ENCODE measurements at regions of chr3 and their contacts with region 1.

Region 1: GRCh38 chr3:179451265-179452175 is at the start of gene GNB4:
- DNase-seq: peak; percentile 34 to 88
- H3K4me3 ChIP-seq: peak within 1 kb of the TSS; percentile 85 to 98
- H3K27ac ChIP-seq: peak within 1 kb of the TSS; percentile 88 to 99
- H3K4me1 ChIP-seq: peaks cover 0 to 21% of the 10 kb centered on the region in 2 donors
- H3K27me3 ChIP-seq: no peaks in the 10 kb centered on the region
- CTCF ChIP-seq: no peak
- total RNA-seq, gene GNB4: 25.3 TPM

Region 2: GRCh38 chr3:179071550-179072397 is 379.7 kb before region 1 on chr3 and contains the start of gene ZMAT3:
- intact Hi-C with region 1: loop called (anchors 5 kb)
- DNase-seq: peak; percentile 41 to 92
- H3K4me3 ChIP-seq: peak within 1 kb of the TSS; percentile 75 to 91
- H3K27ac ChIP-seq: peak within 1 kb of the TSS; percentile 76 to 89
- H3K4me1 ChIP-seq: peaks cover 0 to 9% of the 10 kb centered on the region in 2 donors
- H3K27me3 ChIP-seq: no peaks in the 10 kb centered on the region
- CTCF ChIP-seq: no peak
- total RNA-seq, gene ZMAT3: 38.0 TPM

Region 3: DNA sequence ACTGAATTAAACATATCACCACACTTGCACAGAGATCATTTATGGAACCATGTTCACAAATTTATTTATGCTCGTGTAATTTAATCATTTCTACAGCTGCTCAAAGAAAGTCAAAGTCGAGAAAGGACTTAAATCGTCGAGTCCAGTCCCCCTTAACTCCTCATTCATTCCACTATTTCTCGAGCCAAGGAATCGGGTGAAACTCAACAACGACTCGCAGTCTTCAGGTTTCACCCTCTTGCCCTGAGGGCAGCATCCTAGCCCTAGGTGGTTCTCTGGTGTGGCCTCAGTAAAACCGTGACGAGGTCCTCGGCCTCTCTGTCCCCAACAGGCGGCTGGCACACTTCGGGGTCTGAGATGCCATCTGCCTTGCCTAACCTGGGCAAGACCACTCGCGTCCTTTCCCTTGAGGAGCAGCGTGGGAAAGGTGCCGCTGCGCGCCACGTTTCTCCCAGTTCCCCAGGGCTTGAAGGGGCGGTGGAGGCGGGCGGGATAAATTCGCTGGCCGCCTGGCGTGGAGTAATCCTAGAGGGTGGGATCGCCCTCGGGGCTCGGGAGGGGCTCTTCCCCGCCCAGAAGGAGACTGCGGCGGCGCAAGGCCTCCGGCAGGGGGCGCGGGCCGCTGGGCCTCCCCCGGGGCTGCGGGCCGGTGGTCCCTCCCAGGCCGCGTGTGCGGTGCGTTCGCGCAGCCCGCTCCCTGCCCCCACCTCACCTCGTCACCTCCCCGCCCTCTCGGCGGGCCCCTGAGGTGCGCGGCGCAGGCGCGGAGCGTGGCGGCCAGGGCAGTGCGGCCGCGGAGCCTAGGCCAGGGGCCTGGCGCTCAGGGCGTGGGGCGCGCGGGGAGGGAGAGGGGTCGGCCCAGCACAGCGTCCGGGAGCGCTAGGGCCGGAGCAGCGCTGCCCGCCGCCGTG is 129.0 kb before region 1 on chr3 and contains the start of gene ZNF639:
- intact Hi-C with region 1: loop called (anchors 5 kb)
- DNase-seq: peak; percentile 34 to 93
- H3K4me3 ChIP-seq: peak within 1 kb of the TSS; percentile 86 to 92
- H3K27ac ChIP-seq: peak within 1 kb of the TSS; percentile 94 to 98
- H3K4me1 ChIP-seq: peaks cover 3 to 16% of the 10 kb centered on the region in 2 donors
- H3K27me3 ChIP-seq: no peaks in the 10 kb centered on the region
- CTCF ChIP-seq: peak; percentile 67 to 90 (median 70)
- total RNA-seq, gene ZNF639: 21.4 TPM

Region 4: GRCh38 chr3:179421500-179421899 is 30.0 kb before region 1 on chr3:
- intact Hi-C with region 1: loop called (anchors 2 kb)
- DNase-seq: peak in 1 of 2 donors; percentile 69
- H3K4me3 ChIP-seq: no peak overlapping the region
- H3K27ac ChIP-seq: peak overlapping the region in 1 of 2 donors; percentile 33
- H3K4me1 ChIP-seq: peaks cover 0 to 3% of the 10 kb centered on the region in 2 donors
- H3K27me3 ChIP-seq: no peaks in the 10 kb centered on the region
- CTCF ChIP-seq: peak; percentile 10 to 74 (median 48)

Region 5: DNA sequence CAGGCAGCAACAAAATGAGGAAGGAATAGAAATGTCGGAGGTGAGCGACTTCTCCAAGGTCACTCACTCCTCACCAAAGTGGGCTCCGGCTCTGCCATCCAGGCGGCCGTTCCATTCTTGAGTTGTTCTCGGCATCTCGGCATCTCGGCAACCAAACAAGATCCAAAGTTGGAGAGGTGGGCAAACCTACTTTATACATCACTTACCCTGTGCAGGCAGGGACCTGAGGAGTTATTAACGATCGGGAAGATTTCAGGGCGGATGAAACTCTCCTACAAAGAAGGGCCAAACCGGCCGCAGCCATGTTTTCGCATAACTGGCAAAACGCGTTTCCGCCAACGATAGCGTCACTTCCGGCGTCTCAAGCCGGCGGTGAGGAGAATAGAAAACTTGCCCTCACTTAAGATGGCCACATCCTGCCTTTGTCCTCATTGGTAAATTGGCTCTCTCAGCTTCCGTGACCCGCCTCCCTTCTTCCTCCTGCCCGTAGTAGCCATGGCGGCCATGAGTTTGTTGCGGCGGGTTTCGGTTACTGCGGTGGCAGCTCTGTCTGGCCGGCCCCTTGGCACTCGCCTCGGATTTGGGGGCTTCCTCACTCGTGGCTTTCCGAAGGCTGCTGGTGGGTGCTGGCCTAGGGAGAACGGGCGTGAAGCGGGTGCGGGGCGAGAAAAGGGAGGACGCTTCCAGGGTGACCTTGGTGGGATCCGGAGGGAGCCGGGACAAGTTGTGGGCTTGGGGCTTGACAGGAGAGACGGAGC is 153.0 kb after region 1 on chr3 and contains the starts of genes MRPL47 and NDUFB5:
- intact Hi-C with region 1: loop called (anchors 2 kb)
- DNase-seq: peak; percentile 79 to 97
- H3K4me3 ChIP-seq: peak within 1 kb of the TSS; percentile 78 to 84
- H3K27ac ChIP-seq: peak within 1 kb of the TSS; percentile 79 to 87
- H3K4me1 ChIP-seq: peaks cover 7 to 10% of the 10 kb centered on the region in 2 donors
- H3K27me3 ChIP-seq: no peaks in the 10 kb centered on the region
- CTCF ChIP-seq: no peak
- total RNA-seq, gene MRPL47: 41.1 TPM
- total RNA-seq, gene NDUFB5: 22.4 TPM

Measured in ascending aorta (tissue), 2 donors.